ENCODE measurements at regions of chr11 and their contacts with region 1.

Region 1: DNA sequence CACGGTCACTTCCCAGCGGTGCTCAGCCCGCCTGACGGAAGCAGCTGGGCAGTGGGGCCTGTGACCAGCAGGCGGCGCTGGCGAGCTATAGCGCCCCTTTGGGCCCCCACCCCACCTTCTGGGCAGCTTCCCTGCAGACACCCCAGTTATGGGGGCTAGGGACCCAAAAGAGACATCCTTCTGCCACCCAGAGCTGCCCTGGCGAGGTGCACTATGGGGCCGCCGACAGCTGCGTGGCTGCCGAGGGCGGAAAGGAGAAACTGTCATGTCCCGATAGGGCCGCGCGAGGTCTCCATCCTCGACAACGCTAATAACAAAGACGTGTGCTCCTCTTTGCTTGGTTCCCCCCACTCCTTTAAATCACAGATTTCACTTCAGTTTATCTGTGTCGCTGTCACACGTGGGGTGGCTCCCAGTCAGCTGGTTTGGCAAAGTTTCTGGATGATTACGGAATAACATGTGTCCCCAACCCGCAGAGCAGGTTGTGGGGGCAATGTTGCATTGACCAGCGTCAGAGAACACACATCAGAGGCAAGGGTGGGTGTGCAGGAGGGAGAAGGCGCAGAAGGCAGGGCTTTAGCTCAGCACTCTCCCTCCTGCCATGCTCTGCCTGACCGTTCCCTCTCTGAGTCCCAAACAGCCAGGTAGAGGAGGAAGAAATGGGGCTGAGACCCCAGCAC is 674 bp upstream of the MYO7A start:
- DNase-seq: peak; percentile 73
- ATAC-seq: peak; percentile 66
- H3K4me3 Mint-ChIP-seq: peak overlapping the region; percentile 62
- H3K27ac Mint-ChIP-seq: no peak overlapping the region
- H3K4me1 Mint-ChIP-seq: peaks cover 21% of the 10 kb centered on the region
- H3K27me3 Mint-ChIP-seq: no peaks in the 10 kb centered on the region
- CTCF ChIP-seq: peak; percentile 98

Region 2: GRCh38 chr11:77047007-77047927 is 80.1 kb before region 1 on chr11:
- CTCF ChIA-PET with region 1: interaction called, 12 read pairs
- POLR2A ChIA-PET with region 1: interaction called, 7 read pairs
- DNase-seq: peak; percentile 61
- ATAC-seq: peak; percentile 80
- H3K4me3 Mint-ChIP-seq: peak overlapping the region; percentile 51
- H3K27ac Mint-ChIP-seq: peak overlapping the region; percentile 52
- H3K4me1 Mint-ChIP-seq: peaks cover 14% of the 10 kb centered on the region
- H3K27me3 Mint-ChIP-seq: peaks cover 16% of the 10 kb centered on the region
- CTCF ChIP-seq: no peak

Region 3: GRCh38 chr11:77113382-77114088 is 13.8 kb before region 1 on chr11:
- CTCF ChIA-PET with region 1: interaction called, 86 read pairs
- POLR2A ChIA-PET with region 1: no interaction called
- DNase-seq: peak; percentile 60
- ATAC-seq: peak; percentile 65
- H3K4me3 Mint-ChIP-seq: no peak overlapping the region
- H3K27ac Mint-ChIP-seq: peak overlapping the region; percentile 64
- H3K4me1 Mint-ChIP-seq: peaks cover 12% of the 10 kb centered on the region
- H3K27me3 Mint-ChIP-seq: no peaks in the 10 kb centered on the region
- CTCF ChIP-seq: peak; percentile 45

Region 4: GRCh38 chr11:77147668-77148321 is 20.4 kb after region 1 on chr11:
- CTCF ChIA-PET with region 1: interaction called, 46 read pairs
- POLR2A ChIA-PET with region 1: no interaction called
- DNase-seq: peak; percentile 66
- ATAC-seq: peak; percentile 75
- H3K4me3 Mint-ChIP-seq: peak overlapping the region; percentile 78
- H3K27ac Mint-ChIP-seq: peak overlapping the region; percentile 53
- H3K4me1 Mint-ChIP-seq: peaks cover 23% of the 10 kb centered on the region
- H3K27me3 Mint-ChIP-seq: peaks cover 10% of the 10 kb centered on the region
- CTCF ChIP-seq: no peak

Region 5: GRCh38 chr11:77187776-77188632 is 60.6 kb after region 1 on chr11:
- CTCF ChIA-PET with region 1: interaction called, 147 read pairs
- POLR2A ChIA-PET with region 1: interaction called, 6 read pairs
- DNase-seq: peak; percentile 83
- ATAC-seq: peak; percentile 57
- H3K4me3 Mint-ChIP-seq: no peak overlapping the region
- H3K27ac Mint-ChIP-seq: 0 out of 2 replicates have a peak overlapping the region, but pooled peaks have one; percentile 3
- H3K4me1 Mint-ChIP-seq: peaks cover 16% of the 10 kb centered on the region
- H3K27me3 Mint-ChIP-seq: no peaks in the 10 kb centered on the region; the same call in 1 of the 2 replicates
- CTCF ChIP-seq: peak; percentile 85